Aorta (tissue), 5 donors: ENCODE measurements at regions of chr1 and their contacts with region 1.

Region 1: GRCh38 chr1:3530926-3531818 is 76.7 kb downstream of the ARHGEF16 start:
- DNase-seq: peak; percentile 88 to 92
- ATAC-seq: peak; percentile 65
- H3K4me3 ChIP-seq: peak overlapping the region; percentile 68 to 74
- H3K27ac ChIP-seq: peak overlapping the region; percentile 7 to 41
- H3K4me1 ChIP-seq: no peaks in the 10 kb centered on the region
- H3K27me3 ChIP-seq: no peaks in the 10 kb centered on the region

Region 2: GRCh38 chr1:3553166-3553939 is 22.2 kb after region 1 on chr1:
- intact Hi-C with region 1: loop called in 1 of 2 experiments (anchors 2 kb)
- DNase-seq: no peak
- ATAC-seq: no peak
- H3K4me3 ChIP-seq: no peak overlapping the region
- H3K27ac ChIP-seq: no peak overlapping the region
- H3K4me1 ChIP-seq: peaks cover 0 to 3% of the 10 kb centered on the region in 2 donors
- H3K27me3 ChIP-seq: no peaks in the 10 kb centered on the region